Activated T-helper 1 cell treated with anti-CD3 and anti-CD28 coated beads, Interleukin-12 subunit alpha, Interleukin-12 subunit beta, Interleukin-2, Interleukin-4 antibody, amounts not matched to agents 30 ng/mL and 10 ng/mL and 1 ng/mL, durations not matched to agents 14 hours and 24 hours and 36 hours (primary cell): ENCODE measurements at regions of chr12 and their contacts with region 1.

Region 1: GRCh38 chr12:66087365-66087943 is 43.1 kb downstream of the LLPH start:
- DNase-seq: peak; percentile 22
- H3K4me3 Mint-ChIP-seq: no peak overlapping the region
- H3K27ac Mint-ChIP-seq: no peak overlapping the region
- H3K4me1 Mint-ChIP-seq: no peaks in the 10 kb centered on the region
- H3K27me3 Mint-ChIP-seq: peaks cover 25% of the 10 kb centered on the region

Region 2: GRCh38 chr12:65313719-65314317 is 773.6 kb before region 1 on chr12:
- intact Hi-C with region 1: loop called (anchors 5 kb)
- DNase-seq: no peak
- H3K4me3 Mint-ChIP-seq: no peak overlapping the region
- H3K27ac Mint-ChIP-seq: no peak overlapping the region
- H3K4me1 Mint-ChIP-seq: no peaks in the 10 kb centered on the region
- H3K27me3 Mint-ChIP-seq: peaks cover 5% of the 10 kb centered on the region

Region 3: GRCh38 chr12:65868133-65868705 is 219.2 kb before region 1 on chr12:
- intact Hi-C with region 1: no loop called
- DNase-seq: no peak
- H3K4me3 Mint-ChIP-seq: no peak overlapping the region
- H3K27ac Mint-ChIP-seq: no peak overlapping the region
- H3K4me1 Mint-ChIP-seq: no peaks in the 10 kb centered on the region
- H3K27me3 Mint-ChIP-seq: peaks cover 10% of the 10 kb centered on the region

Region 4: GRCh38 chr12:66103016-66103913 is 15.8 kb after region 1 on chr12:
- intact Hi-C with region 1: no loop called
- DNase-seq: no peak
- H3K4me3 Mint-ChIP-seq: no peak overlapping the region
- H3K27ac Mint-ChIP-seq: no peak overlapping the region
- H3K4me1 Mint-ChIP-seq: peaks cover 10% of the 10 kb centered on the region
- H3K27me3 Mint-ChIP-seq: peaks cover 18% of the 10 kb centered on the region